GM12878 (cell line): ENCODE measurements at regions of chr2 and their contacts with region 1.

Region 1: DNA sequence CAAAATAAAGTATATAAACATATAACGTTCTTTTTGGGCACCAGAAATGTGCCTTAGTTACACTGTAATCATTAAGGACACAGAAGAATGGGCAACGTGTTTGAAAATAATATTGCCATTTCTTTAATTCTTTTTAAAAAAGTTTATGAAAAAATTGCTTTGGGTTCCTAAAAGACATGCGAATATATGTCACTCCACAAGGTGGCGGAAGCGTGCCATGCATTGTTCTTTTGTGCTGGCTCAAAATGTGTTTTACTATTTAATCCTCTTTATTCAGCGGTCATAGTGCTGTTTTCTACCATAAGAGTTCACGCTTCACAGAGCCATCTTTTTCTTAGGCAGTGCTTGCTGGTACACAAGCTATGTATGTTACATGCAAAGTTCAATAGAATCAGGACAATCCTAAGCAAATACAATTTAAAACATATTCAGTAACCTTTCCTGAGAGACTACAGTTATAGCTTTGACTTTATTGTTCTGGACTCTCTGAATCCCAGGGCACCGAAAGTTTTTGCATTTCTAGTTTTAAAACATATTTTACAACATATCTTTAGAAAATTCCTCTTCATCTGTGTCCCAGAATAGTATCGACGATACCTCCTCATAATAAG is 147.8 kb upstream of the ERBB4 start:
- DNase-seq: peak; percentile 60
- ATAC-seq: peak; percentile 84
- H3K4me3 ChIP-seq: no peak overlapping the region
- H3K27ac ChIP-seq: no peak overlapping the region
- H3K4me1 ChIP-seq: peaks cover 4% of the 10 kb centered on the region; the same call in 1 of the 2 replicates
- H3K27me3 ChIP-seq: no peaks in the 10 kb centered on the region
- CTCF ChIP-seq: peak; percentile 78 to 90 (median 85)
- EP300 ChIP-seq: no peak
- POLR2A ChIP-seq: no peak
- RAD21 ChIP-seq: peak; percentile 99

Region 2: GRCh38 chr2:212618641-212619040 is 67.7 kb before region 1 on chr2:
- CTCF ChIA-PET with region 1: no interaction called
- POLR2A ChIA-PET with region 1: no interaction called
- RAD21 ChIA-PET with region 1: no interaction called
- SMC1A ChIA-PET with region 1: no interaction called
- in situ Hi-C with region 1: no loop called
- intact Hi-C with region 1: no loop called
- DNase-seq: no peak
- ATAC-seq: no peak
- H3K4me3 ChIP-seq: no peak overlapping the region
- H3K27ac ChIP-seq: no peak overlapping the region
- H3K4me1 ChIP-seq: no peaks in the 10 kb centered on the region
- H3K27me3 ChIP-seq: no peaks in the 10 kb centered on the region
- CTCF ChIP-seq: no peak
- EP300 ChIP-seq: no peak
- POLR2A ChIP-seq: no peak
- RAD21 ChIP-seq: no peak

Region 3: DNA sequence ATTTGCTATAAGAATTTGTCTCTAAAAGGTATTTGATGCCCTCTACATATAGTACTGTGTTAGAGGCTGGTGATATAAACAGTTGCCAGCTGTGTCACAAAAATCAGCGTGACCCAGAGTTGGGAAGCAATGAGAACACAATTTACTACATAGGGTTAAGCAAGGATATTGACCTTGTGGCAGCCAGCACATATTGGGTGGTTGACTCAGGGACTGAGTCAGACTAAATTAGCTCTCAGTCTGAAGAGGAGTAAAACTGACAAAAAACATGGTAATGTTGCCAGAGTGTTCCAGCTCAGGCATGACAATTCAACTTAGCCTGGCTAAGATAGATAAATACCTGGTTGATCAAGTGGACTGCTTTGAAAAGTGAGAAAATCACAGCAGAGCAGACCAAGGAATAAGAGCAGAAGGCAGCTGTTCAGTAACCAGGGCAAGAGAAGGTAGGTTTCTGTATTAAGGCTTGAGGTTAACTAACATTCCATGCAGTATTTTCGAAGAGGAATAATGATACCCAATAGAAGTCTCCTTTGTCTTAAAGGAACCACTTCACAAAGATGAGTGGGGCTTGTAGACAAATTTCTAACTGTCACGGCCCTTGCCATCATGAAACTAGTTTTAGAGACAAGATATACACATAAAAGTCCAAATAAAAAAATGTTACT is 39.6 kb before region 1 on chr2:
- CTCF ChIA-PET with region 1: no interaction called
- POLR2A ChIA-PET with region 1: no interaction called
- RAD21 ChIA-PET with region 1: no interaction called
- SMC1A ChIA-PET with region 1: no interaction called
- in situ Hi-C with region 1: no loop called
- intact Hi-C with region 1: no loop called
- DNase-seq: no peak
- ATAC-seq: no peak
- H3K4me3 ChIP-seq: no peak overlapping the region
- H3K27ac ChIP-seq: no peak overlapping the region
- H3K4me1 ChIP-seq: no peaks in the 10 kb centered on the region
- H3K27me3 ChIP-seq: no peaks in the 10 kb centered on the region; a peak in 1 of 4 replicates
- CTCF ChIP-seq: no peak
- EP300 ChIP-seq: no peak
- POLR2A ChIP-seq: no peak
- RAD21 ChIP-seq: no peak

Region 4: DNA sequence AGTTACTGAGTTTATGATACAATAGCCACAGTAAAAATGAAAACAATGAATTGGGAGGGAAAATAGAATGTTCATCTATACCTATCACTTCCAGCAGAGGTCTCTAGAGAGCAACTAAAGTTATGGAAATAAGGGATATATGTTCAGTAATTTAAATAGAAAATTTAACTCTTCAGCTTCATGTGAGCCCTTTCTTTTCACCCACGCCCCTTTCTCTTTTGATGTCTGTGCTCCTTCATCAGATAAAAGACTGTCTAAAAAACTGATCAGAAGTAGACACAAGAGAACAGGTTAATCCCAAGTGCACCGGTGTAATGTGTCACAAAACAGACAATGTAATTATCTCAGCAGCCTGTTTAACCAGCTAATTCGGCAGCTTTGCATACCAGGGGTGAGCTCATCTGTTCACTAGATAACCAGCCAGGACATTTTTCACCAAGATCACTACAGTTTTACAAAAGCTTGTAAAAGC is 90.7 kb after region 1 on chr2:
- CTCF ChIA-PET with region 1: interaction called, 4 read pairs
- POLR2A ChIA-PET with region 1: no interaction called
- RAD21 ChIA-PET with region 1: interaction called, 3 read pairs
- SMC1A ChIA-PET with region 1: interaction called, 5 read pairs
- in situ Hi-C with region 1: no loop called
- intact Hi-C with region 1: loop called (anchors 2 kb)
- DNase-seq: peak; percentile 17
- ATAC-seq: peak; percentile 74
- H3K4me3 ChIP-seq: no peak overlapping the region
- H3K27ac ChIP-seq: no peak overlapping the region
- H3K4me1 ChIP-seq: no peaks in the 10 kb centered on the region
- H3K27me3 ChIP-seq: no peaks in the 10 kb centered on the region
- CTCF ChIP-seq: peak; percentile 47 to 63 (median 53)
- EP300 ChIP-seq: no peak
- POLR2A ChIP-seq: no peak
- RAD21 ChIP-seq: peak; percentile 69

Region 5: DNA sequence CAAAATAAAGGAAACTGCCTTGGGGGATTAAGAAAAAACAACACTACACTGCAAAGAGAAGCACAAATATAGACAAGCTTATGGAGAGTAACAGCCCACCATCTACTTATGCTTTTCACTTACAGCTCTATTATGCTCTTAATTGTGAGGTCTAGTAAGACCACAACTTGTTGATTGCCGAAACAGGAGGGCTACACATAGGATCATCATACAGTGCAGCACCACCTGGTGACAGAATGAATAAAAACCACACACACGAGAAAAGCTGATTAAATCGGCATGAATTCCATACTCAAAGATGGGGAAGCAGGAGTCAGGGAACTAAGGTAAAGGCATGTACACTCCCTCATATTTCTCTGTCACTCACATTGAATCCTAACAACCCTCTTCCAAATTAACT is 205.8 kb after region 1 on chr2:
- CTCF ChIA-PET with region 1: interaction called, 3 read pairs
- POLR2A ChIA-PET with region 1: no interaction called
- RAD21 ChIA-PET with region 1: no interaction called
- SMC1A ChIA-PET with region 1: interaction called, 3 read pairs
- in situ Hi-C with region 1: no loop called
- intact Hi-C with region 1: loop called (anchors 1 kb)
- DNase-seq: no peak
- ATAC-seq: peak; percentile 68
- H3K4me3 ChIP-seq: no peak overlapping the region
- H3K27ac ChIP-seq: no peak overlapping the region
- H3K4me1 ChIP-seq: no peaks in the 10 kb centered on the region
- H3K27me3 ChIP-seq: no peaks in the 10 kb centered on the region
- CTCF ChIP-seq: peak in 2 of 3 experiments; percentile 6 to 34; a peak in 2 of 6 replicates
- EP300 ChIP-seq: no peak
- POLR2A ChIP-seq: no peak
- RAD21 ChIP-seq: no peak

Region 6: GRCh38 chr2:213010106-213010779 is 323.9 kb after region 1 on chr2:
- CTCF ChIA-PET with region 1: no interaction called
- POLR2A ChIA-PET with region 1: no interaction called
- RAD21 ChIA-PET with region 1: no interaction called
- SMC1A ChIA-PET with region 1: no interaction called
- in situ Hi-C with region 1: no loop called
- intact Hi-C with region 1: loop called (anchors 5 kb)
- DNase-seq: no peak
- ATAC-seq: peak; percentile 35
- H3K4me3 ChIP-seq: no peak overlapping the region
- H3K27ac ChIP-seq: peak overlapping the region; percentile 16
- H3K4me1 ChIP-seq: peaks cover 20% of the 10 kb centered on the region
- H3K27me3 ChIP-seq: no peaks in the 10 kb centered on the region
- CTCF ChIP-seq: no peak
- EP300 ChIP-seq: no peak
- POLR2A ChIP-seq: peak; percentile 58; the same call in 1 of the 2 replicates
- RAD21 ChIP-seq: no peak

Region 7: DNA sequence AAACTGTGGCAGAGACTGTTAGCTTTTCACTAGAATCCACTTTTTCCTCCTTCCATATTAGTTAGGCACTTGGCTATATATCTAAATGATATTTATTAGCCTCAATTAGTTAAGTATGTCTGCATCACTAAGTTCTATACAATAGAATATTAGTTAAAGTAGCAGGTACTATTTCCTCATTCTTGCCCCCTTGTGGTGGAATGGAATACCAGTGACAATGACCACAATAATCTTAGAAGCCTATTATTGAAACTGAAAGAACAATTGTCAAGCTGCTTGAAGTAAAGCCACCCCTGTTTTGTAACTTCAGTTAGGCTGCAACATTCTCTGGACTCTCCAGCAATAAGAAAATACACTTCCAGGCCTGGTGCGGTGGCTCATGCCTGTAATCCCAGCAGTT is 1248.2 kb after region 1 on chr2:
- CTCF ChIA-PET with region 1: no interaction called
- POLR2A ChIA-PET with region 1: no interaction called
- RAD21 ChIA-PET with region 1: no interaction called
- SMC1A ChIA-PET with region 1: no interaction called
- in situ Hi-C with region 1: loop called (anchors 25 kb)
- intact Hi-C with region 1: loop called (anchors 5 kb)
- DNase-seq: peak; percentile 11
- ATAC-seq: peak; percentile 98
- H3K4me3 ChIP-seq: no peak overlapping the region
- H3K27ac ChIP-seq: no peak overlapping the region
- H3K4me1 ChIP-seq: no peaks in the 10 kb centered on the region
- H3K27me3 ChIP-seq: no peaks in the 10 kb centered on the region
- CTCF ChIP-seq: peak; percentile 48 to 56 (median 49); a peak in 5 of 6 replicates
- EP300 ChIP-seq: no peak
- POLR2A ChIP-seq: no peak
- RAD21 ChIP-seq: peak; percentile 60